ENCODE measurements at regions of chr4 and their contacts with region 1.

Region 1: GRCh38 chr4:127224556-127224955 is 408.2 kb upstream of the INTU start:
- DNase-seq: no peak
- H3K27ac ChIP-seq: no peak overlapping the region
- CTCF ChIP-seq: no peak

Region 2: GRCh38 chr4:127284236-127284635 is 59.7 kb after region 1 on chr4:
- CTCF ChIA-PET with region 1: no interaction called
- POLR2A ChIA-PET with region 1: interaction called, 10 read pairs
- DNase-seq: no peak
- H3K27ac ChIP-seq: no peak overlapping the region
- CTCF ChIP-seq: no peak